HepG2 (cell line): ENCODE measurements at regions of chr9 and their contacts with region 1.

Region 1: DNA sequence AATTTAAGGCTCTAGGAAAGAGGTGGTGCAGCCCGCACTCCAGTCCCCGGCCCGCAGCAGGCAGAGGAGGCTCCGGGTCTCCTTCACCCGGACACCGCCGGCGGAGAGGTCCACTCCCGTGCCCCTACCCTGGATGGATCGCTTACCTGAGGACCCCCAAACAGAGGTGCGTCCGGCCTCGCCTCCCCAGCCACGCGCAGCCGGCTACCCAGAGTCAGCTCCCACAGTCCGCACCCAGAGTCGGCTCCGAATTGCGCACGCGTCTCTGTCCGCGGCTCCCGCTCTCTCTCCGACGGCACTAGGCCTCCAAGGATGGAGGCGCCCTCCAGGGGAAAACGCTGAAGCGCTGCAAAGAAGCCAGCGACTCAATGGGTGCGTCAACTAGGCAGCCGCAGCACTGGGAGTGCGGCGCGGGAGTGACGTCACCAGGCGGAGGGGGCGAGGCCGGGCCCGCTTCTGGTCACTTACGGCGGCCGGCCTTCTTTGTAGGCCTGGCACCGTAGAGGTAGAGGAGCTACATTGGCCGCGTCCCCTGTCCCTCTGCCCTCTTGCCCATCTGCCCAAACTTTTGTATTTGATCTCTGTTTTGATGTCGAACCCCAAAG is at the start of gene ELP1:
- DNase-seq: peak; percentile 93
- ATAC-seq: peak; percentile 94
- H3K4me3 ChIP-seq: peak within 1 kb of the TSS; percentile 84 to 100 (median 95)
- H3K27ac ChIP-seq: peak within 1 kb of the TSS; percentile 84
- H3K4me1 ChIP-seq: peaks cover 44% of the 10 kb centered on the region
- H3K27me3 ChIP-seq: no peaks in the 10 kb centered on the region; a peak in 1 of 5 replicates
- CTCF ChIP-seq: peak; percentile 91
- EP300 ChIP-seq: no peak
- POLR2A ChIP-seq: peak; percentile 46 to 74; a peak in 3 of 4 replicates
- RAD21 ChIP-seq: peak; percentile 78
- total RNA-seq, gene ELP1: 275 and 437 TPM in 2 replicates

Region 2: DNA sequence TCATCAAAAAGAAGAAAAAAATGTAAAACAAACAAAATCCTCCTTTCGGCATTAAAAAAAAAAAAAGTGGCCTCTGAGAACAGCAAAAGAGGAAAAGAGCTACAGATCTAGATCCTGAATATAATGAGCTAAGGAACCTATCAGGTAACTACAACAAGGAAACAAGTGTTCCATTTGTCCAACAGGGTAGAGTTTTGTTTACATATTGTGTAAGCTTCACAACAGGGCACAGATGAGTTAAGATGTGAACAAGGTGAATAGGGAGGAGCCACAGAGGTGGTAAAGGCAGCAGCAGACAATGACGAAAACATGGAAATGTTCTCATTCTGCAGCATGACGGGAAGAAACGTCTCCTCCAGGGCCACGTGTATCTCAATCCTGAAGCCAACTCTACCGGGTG is 14.3 kb before region 1 on chr9:
- CTCF ChIA-PET with region 1: no interaction called
- POLR2A ChIA-PET with region 1: no interaction called
- in situ Hi-C with region 1: no loop called
- intact Hi-C with region 1: loop called (anchors 2 kb)
- DNase-seq: peak; percentile 67
- ATAC-seq: peak; percentile 90
- H3K4me3 ChIP-seq: no peak overlapping the region
- H3K27ac ChIP-seq: peak overlapping the region; percentile 32
- H3K4me1 ChIP-seq: peaks cover 23% of the 10 kb centered on the region
- H3K27me3 ChIP-seq: no peaks in the 10 kb centered on the region
- CTCF ChIP-seq: no peak
- EP300 ChIP-seq: no peak
- POLR2A ChIP-seq: no peak
- RAD21 ChIP-seq: no peak

Region 3: DNA sequence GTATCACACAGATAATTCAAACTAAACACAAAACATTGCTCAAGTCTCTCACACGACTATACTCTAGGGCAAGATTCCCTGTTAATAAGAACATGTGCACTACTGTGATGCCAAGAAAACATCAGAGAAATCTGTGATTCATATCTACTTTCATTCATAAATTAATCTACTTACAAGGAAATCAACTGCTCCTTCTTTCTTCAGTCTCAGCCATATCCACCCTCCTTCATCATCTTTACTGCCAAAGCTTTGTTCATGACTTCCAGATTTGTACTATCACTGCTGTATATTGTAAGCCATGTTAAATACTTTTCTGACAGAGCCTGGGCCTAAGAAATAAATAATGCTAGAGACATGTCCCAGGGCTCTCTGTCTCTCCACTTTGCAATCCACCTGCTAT is 44.4 kb after region 1 on chr9:
- CTCF ChIA-PET with region 1: no interaction called
- POLR2A ChIA-PET with region 1: no interaction called
- in situ Hi-C with region 1: no loop called
- intact Hi-C with region 1: no loop called
- DNase-seq: no peak
- ATAC-seq: no peak
- H3K4me3 ChIP-seq: no peak overlapping the region
- H3K27ac ChIP-seq: no peak overlapping the region
- H3K4me1 ChIP-seq: no peaks in the 10 kb centered on the region
- H3K27me3 ChIP-seq: no peaks in the 10 kb centered on the region
- CTCF ChIP-seq: no peak
- EP300 ChIP-seq: no peak
- POLR2A ChIP-seq: no peak
- RAD21 ChIP-seq: no peak